Ascending aorta (tissue), 2 donors: ENCODE measurements at regions of chr1 and their contacts with region 1.

Region 1: GRCh38 chr1:213767683-213768082 is 220.1 kb upstream of the PROX1 start:
- DNase-seq: no peak
- H3K4me3 ChIP-seq: no peak overlapping the region
- H3K27ac ChIP-seq: no peak overlapping the region
- H3K4me1 ChIP-seq: no peaks in the 10 kb centered on the region
- H3K27me3 ChIP-seq: no peaks in the 10 kb centered on the region
- CTCF ChIP-seq: no peak

Region 2: DNA sequence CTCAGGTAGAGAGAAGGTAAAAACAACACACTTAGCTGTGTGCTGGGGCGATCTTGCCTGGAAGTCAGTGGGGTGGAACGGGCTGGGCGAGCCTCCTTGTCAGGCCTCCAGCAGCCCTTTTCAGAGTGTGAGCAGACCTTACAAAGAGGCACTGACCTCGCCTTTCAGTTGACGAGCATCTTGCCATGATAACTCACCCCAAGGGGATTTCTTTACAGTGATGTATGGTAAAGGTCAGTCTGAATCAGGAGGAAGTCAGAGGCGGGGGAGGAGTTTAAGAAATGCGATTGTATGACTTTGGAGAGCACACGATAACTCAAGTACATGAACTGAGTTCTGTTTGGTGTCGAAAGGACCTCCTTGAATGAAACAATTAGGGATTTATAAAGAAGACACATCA is 106.4 kb before region 1 on chr1:
- intact Hi-C with region 1: no loop called
- DNase-seq: no peak
- H3K4me3 ChIP-seq: no peak overlapping the region
- H3K27ac ChIP-seq: no peak overlapping the region
- H3K4me1 ChIP-seq: no peaks in the 10 kb centered on the region
- H3K27me3 ChIP-seq: no peaks in the 10 kb centered on the region
- CTCF ChIP-seq: no peak

Region 3: DNA sequence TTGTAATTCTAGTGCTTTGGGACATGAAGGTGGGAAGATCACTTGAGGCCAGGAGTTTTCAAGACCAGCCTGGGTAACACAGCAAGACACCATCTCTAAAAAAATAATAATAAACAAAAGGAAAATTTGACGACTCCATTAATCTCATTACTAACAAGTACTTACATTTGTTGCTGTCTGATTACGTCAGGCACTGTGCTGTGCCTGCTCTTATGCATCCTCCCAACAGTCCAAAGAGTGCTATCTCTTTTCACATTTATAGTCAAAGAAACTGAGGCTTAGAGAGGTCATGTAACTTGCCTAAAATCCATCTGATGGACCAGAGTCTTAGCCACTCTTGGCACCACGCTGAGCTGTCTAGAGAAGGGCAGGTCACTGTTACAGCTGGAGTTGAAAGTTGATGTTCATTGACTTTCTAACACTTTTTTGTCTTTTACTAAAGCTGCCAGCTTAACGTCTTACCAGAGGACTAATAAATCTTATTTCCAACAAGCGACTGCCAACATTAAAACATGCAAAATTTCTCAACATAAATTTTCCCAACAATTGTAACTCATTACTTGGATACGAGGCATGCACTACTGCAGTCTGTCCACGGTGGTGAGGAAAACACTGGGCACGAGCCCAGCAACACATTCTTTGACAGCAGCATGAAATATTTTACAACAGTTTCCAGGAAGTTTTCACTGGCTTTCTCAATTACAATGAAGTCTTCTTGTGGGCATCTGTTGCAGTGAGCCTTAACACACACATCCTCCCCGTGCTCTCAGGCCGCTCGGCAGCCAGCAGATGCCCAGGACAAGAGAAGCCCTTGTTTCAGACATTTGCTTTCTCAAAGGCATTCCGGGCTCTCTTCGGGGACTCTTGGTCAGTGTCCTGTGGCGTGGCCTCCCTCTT is 42.8 kb before region 1 on chr1:
- intact Hi-C with region 1: loop called (anchors 5 kb)
- DNase-seq: no peak
- H3K4me3 ChIP-seq: no peak overlapping the region
- H3K27ac ChIP-seq: no peak overlapping the region
- H3K4me1 ChIP-seq: no peaks in the 10 kb centered on the region
- H3K27me3 ChIP-seq: no peaks in the 10 kb centered on the region
- CTCF ChIP-seq: no peak

Region 4: DNA sequence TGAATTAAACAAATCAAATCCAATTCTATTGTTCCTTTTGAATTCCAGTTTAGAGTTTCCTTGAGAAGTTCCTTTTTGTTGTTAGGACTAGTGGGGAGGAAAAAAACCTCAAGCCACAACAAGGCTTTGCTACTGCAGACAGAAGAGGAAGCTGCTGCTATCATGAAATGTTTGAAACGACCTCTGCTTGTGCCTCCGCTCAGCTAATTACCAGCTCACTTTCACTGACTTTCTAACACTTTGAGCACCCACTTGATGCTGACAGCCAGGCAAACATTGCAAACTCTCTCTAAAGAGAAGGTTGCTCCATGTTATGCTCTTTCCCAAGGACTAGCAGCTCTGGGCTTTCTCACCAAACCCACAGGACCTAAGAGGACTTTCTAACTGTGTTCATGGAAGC is 16.2 kb after region 1 on chr1:
- intact Hi-C with region 1: no loop called
- DNase-seq: no peak
- H3K4me3 ChIP-seq: no peak overlapping the region
- H3K27ac ChIP-seq: no peak overlapping the region
- H3K4me1 ChIP-seq: no peaks in the 10 kb centered on the region
- H3K27me3 ChIP-seq: no peaks in the 10 kb centered on the region
- CTCF ChIP-seq: no peak